ENCODE measurements at regions of chr2 and their contacts with region 1.

Region 1: GRCh38 chr2:199627391-199627790 is 169.7 kb upstream of the SATB2 start:
- DNase-seq: no peak

Region 2: DNA sequence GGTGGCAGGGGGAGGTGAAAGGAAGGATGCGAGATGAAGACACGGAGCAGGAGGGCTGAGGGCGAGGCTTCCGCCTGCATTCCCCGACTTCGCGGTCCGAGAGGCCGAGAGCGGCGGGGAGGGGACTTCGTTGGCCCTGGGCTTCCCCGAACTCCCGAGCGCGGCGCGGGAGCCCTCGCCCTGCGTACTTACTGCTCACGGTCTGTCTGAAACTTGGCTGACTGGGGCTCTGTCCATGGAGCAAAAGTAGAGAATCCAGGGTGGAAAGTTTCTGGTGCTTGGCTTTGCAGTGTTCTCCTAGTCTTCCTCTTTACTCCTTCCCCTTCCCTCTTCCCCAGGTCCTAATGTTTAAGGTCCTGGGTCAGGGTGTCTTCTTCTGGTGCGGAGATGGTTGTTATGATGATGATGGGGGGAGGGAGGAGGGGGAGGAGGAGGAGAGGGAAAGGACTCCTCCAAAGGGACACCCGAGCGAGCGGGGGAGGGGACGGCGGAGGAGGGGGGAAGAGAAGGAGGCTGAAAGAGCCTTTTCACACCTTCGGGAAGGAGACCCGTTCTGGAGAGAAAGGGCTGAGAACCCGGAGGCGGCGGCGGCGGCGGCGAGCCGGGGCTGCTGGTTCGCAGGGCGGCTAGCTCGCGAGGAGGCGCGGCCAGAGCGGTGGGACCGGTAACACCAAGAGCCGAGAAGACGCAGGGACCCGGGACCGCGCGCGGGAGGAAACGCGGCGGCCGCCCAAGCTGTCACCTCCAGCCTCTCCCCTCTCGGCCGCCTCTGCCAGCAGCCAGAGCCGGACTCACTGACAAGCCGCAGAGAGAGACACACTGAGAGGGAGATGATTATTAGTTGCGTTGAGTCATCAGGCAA is 170.0 kb before region 1 on chr2 and contains the start of gene SATB2:
- intact Hi-C with region 1: no loop called
- DNase-seq: peak; percentile 81
- total RNA-seq, gene SATB2: 5.3 to 9.0 TPM

Region 3: DNA sequence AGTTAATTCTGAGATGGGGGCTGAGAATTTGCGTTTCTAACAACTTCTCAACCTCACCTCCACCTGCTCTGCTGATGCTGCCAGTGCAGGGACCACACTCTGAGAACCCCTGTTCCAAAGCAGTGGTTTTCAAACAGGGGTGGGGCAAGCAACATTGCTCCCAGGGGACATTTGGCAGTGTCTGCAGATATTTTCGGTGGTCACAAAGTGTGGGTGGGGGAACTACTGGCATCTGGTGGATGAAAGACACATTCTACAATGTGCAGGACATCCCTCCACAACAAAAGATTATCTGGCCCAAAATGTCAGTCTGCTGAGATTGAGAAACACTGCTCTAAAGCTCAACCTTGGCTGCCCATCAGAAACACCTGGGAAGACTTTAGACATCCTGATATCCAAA is 19.0 kb after region 1 on chr2:
- intact Hi-C with region 1: no loop called
- DNase-seq: no peak

Region 4: GRCh38 chr2:199784512-199784911 is 157.1 kb after region 1 on chr2:
- intact Hi-C with region 1: loop called in 1 of 2 experiments (anchors 2 kb)
- DNase-seq: no peak

Measured in posterior vena cava (tissue), 2 donors.